Breast epithelium (tissue), 4 donors: ENCODE measurements at regions of chr4 and their contacts with region 1.

Region 1: GRCh38 chr4:76499461-76499860 is 64.4 kb downstream of the SHROOM3 start:
- DNase-seq: no peak
- H3K4me3 ChIP-seq: no peak overlapping the region
- H3K27ac ChIP-seq: no peak overlapping the region
- H3K4me1 ChIP-seq: no peaks in the 10 kb centered on the region
- H3K27me3 ChIP-seq: no peaks in the 10 kb centered on the region
- CTCF ChIP-seq: no peak
- POLR2A ChIP-seq: no peak

Region 2: DNA sequence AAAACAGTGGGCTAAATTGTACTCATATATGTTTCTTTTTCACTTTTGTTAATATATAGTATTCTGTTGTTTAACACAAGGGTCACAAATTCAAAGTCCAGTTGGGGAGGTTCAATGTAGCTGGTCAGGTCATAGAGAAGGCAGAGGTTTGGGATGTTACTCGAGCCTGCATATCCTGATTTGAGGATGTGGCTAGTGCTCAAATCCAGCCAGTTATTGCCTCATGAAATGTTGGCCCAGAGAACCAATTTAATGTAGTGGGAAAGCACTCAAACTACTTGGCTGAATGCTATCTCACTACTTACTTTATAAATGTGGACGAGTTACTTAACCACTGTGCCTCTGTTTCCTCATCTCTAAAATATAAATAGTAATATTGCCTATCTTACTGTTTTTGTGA is 762.6 kb before region 1 on chr4:
- intact Hi-C with region 1: loop called (anchors 10 kb)
- DNase-seq: no peak
- H3K4me3 ChIP-seq: no peak overlapping the region
- H3K27ac ChIP-seq: no peak overlapping the region
- H3K4me1 ChIP-seq: no peaks in the 10 kb centered on the region
- H3K27me3 ChIP-seq: no peaks in the 10 kb centered on the region
- CTCF ChIP-seq: no peak
- POLR2A ChIP-seq: no peak

Region 3: DNA sequence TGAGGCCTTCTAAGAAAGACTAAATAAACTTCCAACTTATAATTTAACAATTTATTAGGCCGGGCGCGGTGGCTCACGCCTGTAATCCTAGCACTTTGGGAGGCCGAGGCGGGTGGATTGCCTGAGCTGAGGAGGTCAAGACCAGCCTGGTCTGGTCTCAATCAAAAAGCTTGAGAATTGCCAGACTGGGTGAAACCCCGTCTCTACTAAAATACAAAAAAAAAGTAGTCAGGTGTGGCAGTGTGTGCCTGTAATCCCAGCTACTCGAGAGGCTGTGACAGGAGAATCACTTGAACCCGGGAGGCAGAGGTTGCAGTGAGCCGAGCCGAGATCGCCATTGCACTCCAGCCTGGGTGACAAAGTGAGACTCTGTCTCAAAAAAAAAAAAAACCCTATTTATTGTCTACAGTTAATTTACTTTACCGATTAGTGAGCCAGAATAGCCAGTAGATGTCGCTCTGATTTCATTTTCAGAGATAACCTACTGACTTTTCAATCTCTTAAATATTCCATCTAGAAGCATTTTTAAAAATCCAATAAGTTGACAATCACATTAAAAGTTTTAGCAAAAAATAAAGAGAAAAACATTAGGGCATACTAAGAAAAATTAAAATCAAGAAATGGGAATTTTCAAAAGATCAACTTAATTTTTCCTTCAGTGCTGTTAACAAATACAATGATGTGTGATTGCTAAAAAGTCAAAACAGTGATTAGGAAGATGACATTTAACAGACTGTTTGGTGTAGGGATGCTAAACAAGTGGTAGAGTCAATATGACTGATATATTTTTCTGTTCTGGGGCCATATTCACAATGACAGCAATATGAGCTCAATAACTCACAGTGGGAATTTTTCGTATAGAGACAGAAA is 68.7 kb before region 1 on chr4:
- intact Hi-C with region 1: loop called (anchors 10 kb)
- DNase-seq: no peak
- H3K4me3 ChIP-seq: peak overlapping the region in 1 of 3 donors; percentile 10
- H3K27ac ChIP-seq: no peak overlapping the region
- H3K4me1 ChIP-seq: no peaks in the 10 kb centered on the region
- H3K27me3 ChIP-seq: no peaks in the 10 kb centered on the region
- CTCF ChIP-seq: peak in 2 of 3 donors; percentile 58 to 70
- POLR2A ChIP-seq: no peak

Region 4: DNA sequence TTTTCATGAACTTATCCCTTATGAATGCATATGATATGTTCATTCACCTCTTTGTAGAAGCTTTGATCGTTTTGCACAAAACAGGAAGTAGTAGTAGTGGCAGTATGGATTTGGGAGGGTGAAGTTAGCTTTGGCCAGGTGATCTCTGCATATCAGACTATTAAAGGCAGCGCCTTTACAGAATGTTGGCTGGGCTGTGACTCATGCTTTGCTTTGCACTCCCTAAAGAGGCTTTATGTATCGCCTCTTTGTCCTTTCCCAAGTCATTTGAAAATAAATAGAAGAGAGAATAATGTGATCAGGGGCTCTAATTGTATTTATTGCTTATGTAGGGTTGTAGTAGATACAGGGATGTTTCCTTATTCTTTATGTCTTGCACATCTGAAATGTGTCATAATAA is 14.0 kb before region 1 on chr4:
- intact Hi-C with region 1: no loop called
- DNase-seq: no peak
- H3K4me3 ChIP-seq: no peak overlapping the region
- H3K27ac ChIP-seq: no peak overlapping the region
- H3K4me1 ChIP-seq: no peaks in the 10 kb centered on the region
- H3K27me3 ChIP-seq: no peaks in the 10 kb centered on the region
- CTCF ChIP-seq: no peak
- POLR2A ChIP-seq: no peak

Region 5: GRCh38 chr4:76526585-76526990 is 27.1 kb after region 1 on chr4:
- intact Hi-C with region 1: no loop called
- DNase-seq: peak in 1 of 2 donors; percentile 76
- H3K4me3 ChIP-seq: peak overlapping the region in 1 of 3 donors; percentile 27
- H3K27ac ChIP-seq: peak overlapping the region; percentile 80 to 87
- H3K4me1 ChIP-seq: no peaks in the 10 kb centered on the region
- H3K27me3 ChIP-seq: no peaks in the 10 kb centered on the region
- CTCF ChIP-seq: no peak
- POLR2A ChIP-seq: no peak